ENCODE measurements at regions of chr20 and their contacts with region 1.

Region 1: DNA sequence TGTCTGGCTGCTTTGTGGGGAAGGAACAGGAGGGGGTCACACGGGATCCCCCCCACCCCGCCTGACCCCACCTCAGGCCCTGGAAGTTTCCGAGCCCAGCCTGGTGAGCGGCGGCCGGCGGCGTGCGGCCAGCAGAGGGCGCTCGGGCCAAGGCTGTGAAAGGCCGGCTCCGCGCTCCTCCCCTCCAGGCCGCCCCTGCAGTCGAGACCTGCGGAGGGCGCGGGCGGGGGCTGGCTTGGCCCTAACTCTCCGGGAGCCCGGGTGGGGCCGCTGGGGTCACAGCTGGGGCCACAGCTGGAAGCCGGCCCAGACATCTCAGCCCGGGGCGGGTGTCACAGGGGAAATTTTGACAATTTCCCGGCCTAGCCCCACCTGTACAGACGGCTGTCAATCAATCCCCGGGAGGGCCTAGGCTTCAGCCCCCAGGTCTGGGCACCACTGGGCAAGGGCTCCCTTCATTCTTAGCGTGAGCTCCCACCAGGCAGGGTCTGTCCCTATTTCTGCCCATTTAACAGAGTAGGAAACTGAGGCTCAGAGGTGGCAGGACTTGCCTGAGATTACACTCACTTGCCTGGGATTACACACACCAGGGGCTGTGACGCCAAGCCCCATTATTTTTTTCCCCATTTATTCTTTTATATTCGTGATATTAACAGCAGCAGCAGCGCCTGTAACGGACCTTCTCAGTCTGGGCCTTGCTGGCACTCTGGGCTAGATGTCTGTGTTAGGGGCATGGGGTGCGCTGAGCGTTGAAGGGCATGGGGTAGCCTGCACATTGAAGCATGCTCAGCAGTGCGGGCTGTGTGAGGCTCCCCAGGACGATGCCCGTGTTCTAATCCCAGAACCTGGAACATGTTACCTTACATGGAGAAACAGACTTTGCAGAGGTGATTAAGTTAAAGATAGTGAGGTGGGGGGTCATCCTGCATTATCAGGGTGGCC is 23.0 kb downstream of the ZBP1 start:
- DNase-seq: peak; percentile 80 to 93 (median 89)
- ATAC-seq: peak; percentile 92
- H3K4me3 ChIP-seq: no peak overlapping the region; the same call in 1 of the 2 replicates
- H3K27ac ChIP-seq: no peak overlapping the region
- H3K4me1 ChIP-seq: peaks cover 15 to 32% of the 10 kb centered on the region in 2 experiments; a peak in 4 of 5 replicates
- H3K27me3 ChIP-seq: peaks cover 6 to 33% of the 10 kb centered on the region in 2 experiments; a peak in 2 of 5 replicates
- CTCF ChIP-seq: peak; percentile 82 to 95 (median 83)
- EP300 ChIP-seq: no peak
- POLR2A ChIP-seq: no peak
- RAD21 ChIP-seq: peak; percentile 87 to 89

Region 2: GRCh38 chr20:57383447-57384347 is 213.6 kb before region 1 on chr20:
- CTCF ChIA-PET with region 1: interaction called, 12 read pairs
- POLR2A ChIA-PET with region 1: no interaction called
- in situ Hi-C with region 1: loop called (anchors 5 kb)
- intact Hi-C with region 1: loop called (anchors 1 kb)
- DNase-seq: no peak
- ATAC-seq: no peak
- H3K4me3 ChIP-seq: no peak overlapping the region
- H3K27ac ChIP-seq: no peak overlapping the region
- H3K4me1 ChIP-seq: peaks cover 2 to 16% of the 10 kb centered on the region in 2 experiments; a peak in 4 of 5 replicates
- H3K27me3 ChIP-seq: no peaks in the 10 kb centered on the region
- CTCF ChIP-seq: no peak
- EP300 ChIP-seq: no peak
- POLR2A ChIP-seq: no peak
- RAD21 ChIP-seq: no peak

Region 3: DNA sequence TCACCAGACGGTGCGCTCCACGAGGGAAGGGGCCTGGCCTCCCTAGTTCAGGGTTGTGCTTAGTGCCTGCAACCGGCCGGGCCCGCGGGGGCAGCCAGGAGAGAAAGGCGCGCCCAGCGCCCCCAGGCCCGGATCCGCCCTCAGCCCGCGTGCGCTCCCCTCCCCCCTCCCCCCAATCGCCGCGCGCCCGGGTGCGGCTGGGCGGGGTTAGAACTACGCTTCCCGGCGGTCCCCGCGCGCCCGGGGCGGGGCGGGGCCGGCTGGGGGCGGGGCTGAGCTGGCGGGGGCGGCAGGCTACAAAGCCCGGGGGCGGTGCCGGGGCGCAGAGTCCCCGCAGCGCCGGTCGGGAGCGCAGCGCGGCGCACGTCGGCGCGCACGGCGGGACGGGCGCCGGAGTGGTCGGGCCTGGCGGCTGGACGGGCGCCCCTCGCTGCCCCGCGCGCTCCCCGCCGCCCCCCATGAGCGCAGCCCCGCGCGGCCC is 206.2 kb before region 1 on chr20 and contains the start of gene RBM38:
- CTCF ChIA-PET with region 1: no interaction called
- POLR2A ChIA-PET with region 1: no interaction called
- in situ Hi-C with region 1: loop called (anchors 5 kb)
- intact Hi-C with region 1: no loop called
- DNase-seq: peak; percentile 89 to 96 (median 92)
- ATAC-seq: peak; percentile 76
- H3K4me3 ChIP-seq: peak within 1 kb of the TSS; percentile 75
- H3K27ac ChIP-seq: peak within 1 kb of the TSS; percentile 95
- H3K4me1 ChIP-seq: peaks cover 34 to 68% of the 10 kb centered on the region in 2 experiments
- H3K27me3 ChIP-seq: no peaks in the 10 kb centered on the region
- CTCF ChIP-seq: no peak
- EP300 ChIP-seq: no peak
- POLR2A ChIP-seq: peak; percentile 76
- RAD21 ChIP-seq: no peak
- polyA plus RNA-seq, gene RBM38: 0.28 to 0.39 TPM

Region 4: DNA sequence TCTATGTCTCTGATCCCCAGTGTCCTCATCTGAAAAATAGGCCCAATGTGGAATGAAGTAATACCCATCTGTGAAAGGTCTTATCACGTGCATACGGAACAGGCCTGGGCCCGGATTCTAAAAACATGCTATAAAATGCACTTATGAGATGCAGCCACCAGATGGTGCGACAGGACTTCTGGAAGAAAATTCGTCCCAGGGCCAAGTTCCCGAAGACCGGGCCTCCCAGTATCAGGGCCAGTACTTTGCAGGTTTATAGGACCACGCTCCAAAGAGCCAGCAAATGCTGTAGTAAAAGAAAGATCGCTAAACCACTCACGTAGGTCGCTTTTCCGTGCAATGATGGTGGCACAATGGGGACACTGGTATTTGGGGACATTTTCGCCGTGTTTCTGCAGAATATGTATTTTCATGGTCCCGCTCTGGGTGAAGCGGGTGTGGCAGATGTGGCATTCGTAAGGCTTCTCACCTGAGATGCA is 83.0 kb before region 1 on chr20:
- CTCF ChIA-PET with region 1: interaction called, 82 read pairs
- POLR2A ChIA-PET with region 1: interaction called, 3 read pairs
- in situ Hi-C with region 1: no loop called
- intact Hi-C with region 1: loop called (anchors 1 kb)
- DNase-seq: peak; percentile 41 to 63 (median 42)
- ATAC-seq: peak; percentile 65
- H3K4me3 ChIP-seq: no peak overlapping the region
- H3K27ac ChIP-seq: no peak overlapping the region
- H3K4me1 ChIP-seq: no peaks in the 10 kb centered on the region
- H3K27me3 ChIP-seq: no peaks in the 10 kb centered on the region
- CTCF ChIP-seq: peak; percentile 61 to 71 (median 64)
- EP300 ChIP-seq: no peak
- POLR2A ChIP-seq: no peak
- RAD21 ChIP-seq: peak; percentile 43 to 64

Region 5: DNA sequence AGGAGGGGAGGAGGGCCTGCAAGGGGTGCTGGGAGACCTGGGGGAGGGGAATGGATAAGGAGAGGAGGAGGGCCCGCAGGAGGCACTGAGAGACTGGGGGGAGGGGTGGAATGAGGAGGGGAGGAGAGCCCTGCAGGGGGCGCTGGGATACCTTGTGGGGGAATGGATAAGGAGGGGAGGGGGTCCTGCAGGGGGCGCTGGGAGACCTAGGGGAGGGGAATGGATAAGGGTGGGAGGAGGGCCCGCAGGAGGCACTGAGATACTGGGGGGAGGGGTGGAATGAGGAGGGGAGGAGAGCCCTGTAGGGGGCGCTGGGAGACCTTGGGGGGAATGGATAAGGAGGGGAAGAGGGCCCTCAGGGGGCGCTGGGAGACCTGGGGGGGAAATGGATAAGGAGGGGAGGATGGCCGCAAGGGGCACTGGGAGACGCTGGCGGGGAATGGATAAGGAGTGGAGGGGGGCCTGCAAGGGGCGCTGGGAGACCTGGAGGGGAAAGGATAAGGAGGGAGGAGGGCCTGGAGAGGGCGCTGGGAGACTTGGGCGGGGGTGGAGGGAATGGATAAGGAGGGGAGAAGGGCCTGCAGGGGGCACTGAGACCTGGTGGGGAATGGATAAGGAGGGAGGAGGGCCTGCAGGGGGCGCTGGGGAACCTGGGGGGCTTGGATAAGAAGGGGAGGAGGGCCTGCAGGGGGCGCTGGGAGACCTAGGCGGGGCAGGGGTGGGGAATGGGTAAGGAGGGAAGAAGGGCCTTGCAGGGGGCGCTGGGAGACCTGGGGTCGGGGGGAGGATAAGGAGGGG is 71.0 kb before region 1 on chr20:
- CTCF ChIA-PET with region 1: interaction called, 103 read pairs
- POLR2A ChIA-PET with region 1: no interaction called
- in situ Hi-C with region 1: loop called (anchors 5 kb)
- intact Hi-C with region 1: loop called (anchors 1 kb)
- DNase-seq: peak; percentile 70 to 95 (median 77)
- ATAC-seq: peak; percentile 60
- H3K4me3 ChIP-seq: peak overlapping the region; percentile 26
- H3K27ac ChIP-seq: peak overlapping the region; percentile 93; the same call in 1 of the 3 replicates
- H3K4me1 ChIP-seq: peaks cover 22 to 32% of the 10 kb centered on the region in 2 experiments; a peak in 4 of 5 replicates
- H3K27me3 ChIP-seq: no peaks in the 10 kb centered on the region
- CTCF ChIP-seq: peak; percentile 59 to 98 (median 86)
- EP300 ChIP-seq: no peak; the same call in none of the 2 replicates
- POLR2A ChIP-seq: no peak
- RAD21 ChIP-seq: peak in 1 of 2 experiments; percentile 17; a peak in 1 of 4 replicates

Region 6: DNA sequence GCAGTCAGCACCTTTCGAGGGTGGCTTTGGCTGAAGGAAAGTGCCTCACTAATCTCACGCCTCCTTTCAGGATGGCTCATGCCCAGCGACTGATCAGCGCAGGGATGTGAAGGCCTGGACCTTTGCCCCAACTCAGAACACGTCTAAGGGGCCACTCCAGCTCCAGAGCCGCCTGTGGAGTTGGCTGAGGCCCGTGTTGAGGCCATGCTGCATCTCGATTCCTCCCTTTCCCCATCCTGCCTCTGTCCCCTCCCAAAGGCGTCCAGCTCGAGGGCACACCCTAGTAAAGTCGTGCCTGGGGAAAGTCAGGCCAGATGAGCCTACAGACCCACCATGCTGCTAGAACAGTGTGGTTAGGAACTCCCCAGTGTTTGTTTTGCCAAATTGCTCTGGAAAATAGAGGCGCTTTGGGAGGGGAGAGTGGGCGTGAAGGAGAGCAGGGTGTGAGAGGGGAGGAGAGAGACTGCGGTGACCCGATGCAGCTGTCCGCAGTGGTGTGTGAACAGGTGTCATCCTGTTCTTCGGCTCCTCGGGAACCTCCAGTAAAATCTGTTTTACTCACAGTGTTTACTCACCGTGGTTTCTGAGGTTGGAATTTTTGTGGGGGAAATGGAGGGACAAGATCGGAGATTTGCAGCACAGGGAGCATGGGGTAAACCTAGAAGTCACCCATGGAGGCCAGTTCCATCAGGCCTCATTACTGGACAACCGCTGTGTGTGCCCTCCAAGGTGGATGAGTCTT is 197.5 kb after region 1 on chr20:
- CTCF ChIA-PET with region 1: no interaction called
- POLR2A ChIA-PET with region 1: no interaction called
- in situ Hi-C with region 1: no loop called
- intact Hi-C with region 1: no loop called
- DNase-seq: no peak
- ATAC-seq: no peak
- H3K4me3 ChIP-seq: no peak overlapping the region
- H3K27ac ChIP-seq: no peak overlapping the region
- H3K4me1 ChIP-seq: no peaks in the 10 kb centered on the region
- H3K27me3 ChIP-seq: peaks cover 5 to 40% of the 10 kb centered on the region in 2 experiments; a peak in 3 of 5 replicates
- CTCF ChIP-seq: no peak
- EP300 ChIP-seq: no peak
- POLR2A ChIP-seq: no peak
- RAD21 ChIP-seq: no peak

Region 7: DNA sequence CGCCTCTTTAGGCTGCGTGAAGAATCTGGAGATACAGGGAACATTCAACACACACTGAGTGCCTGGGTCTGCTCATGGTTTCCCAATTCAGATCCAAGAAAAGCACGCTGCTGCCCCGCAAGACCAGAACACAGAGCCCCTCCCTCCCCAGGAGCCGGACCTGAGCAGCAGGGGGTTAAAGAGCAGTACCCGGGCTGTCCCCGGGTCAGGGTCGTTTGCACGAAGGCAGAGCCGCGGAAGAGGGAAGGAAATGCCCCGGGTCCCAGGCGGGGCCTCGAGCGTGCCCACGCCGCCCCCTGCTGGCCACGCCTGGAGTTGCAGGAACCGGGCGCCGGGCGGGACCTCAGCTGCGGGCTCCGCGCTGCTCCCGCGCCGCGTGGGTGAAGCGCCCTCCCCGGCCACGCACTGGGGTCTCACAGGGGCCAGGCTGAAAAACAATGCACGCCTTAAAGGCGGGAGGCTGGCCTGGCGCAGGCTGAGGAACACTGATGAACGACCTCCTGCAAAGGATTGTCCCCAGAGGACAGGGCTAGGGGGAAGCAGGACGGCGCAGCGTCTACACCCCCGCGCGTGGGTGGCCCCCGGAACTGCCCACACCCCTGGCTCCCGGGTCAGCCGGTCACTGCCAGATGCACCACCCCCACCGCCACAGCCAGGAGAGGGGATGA is 582.3 kb after region 1 on chr20:
- CTCF ChIA-PET with region 1: interaction called, 7 read pairs
- POLR2A ChIA-PET with region 1: no interaction called
- in situ Hi-C with region 1: no loop called
- intact Hi-C with region 1: loop called (anchors 5 kb)
- DNase-seq: peak; percentile 73 to 89 (median 84)
- ATAC-seq: peak; percentile 96
- H3K4me3 ChIP-seq: no peak overlapping the region; the same call in 1 of the 2 replicates
- H3K27ac ChIP-seq: no peak overlapping the region
- H3K4me1 ChIP-seq: peaks cover 0 to 9% of the 10 kb centered on the region in 2 experiments; a peak in 3 of 5 replicates
- H3K27me3 ChIP-seq: peaks cover 22 to 47% of the 10 kb centered on the region in 2 experiments; a peak in 4 of 5 replicates
- CTCF ChIP-seq: peak; percentile 85 to 89 (median 86)
- EP300 ChIP-seq: no peak
- POLR2A ChIP-seq: no peak
- RAD21 ChIP-seq: peak; percentile 68 to 86

Region 8: GRCh38 chr20:58209652-58210397 is 612.6 kb after region 1 on chr20:
- CTCF ChIA-PET with region 1: interaction called, 59 read pairs
- POLR2A ChIA-PET with region 1: interaction called, 3 read pairs
- in situ Hi-C with region 1: loop called (anchors 25 kb)
- intact Hi-C with region 1: loop called (anchors 2 kb)
- DNase-seq: peak; percentile 86 to 94 (median 92)
- ATAC-seq: peak; percentile 96
- H3K4me3 ChIP-seq: no peak overlapping the region
- H3K27ac ChIP-seq: no peak overlapping the region
- H3K4me1 ChIP-seq: peaks cover 0 to 6% of the 10 kb centered on the region in 2 experiments; a peak in 1 of 5 replicates
- H3K27me3 ChIP-seq: peaks cover 26 to 63% of the 10 kb centered on the region in 2 experiments
- CTCF ChIP-seq: peak; percentile 100
- EP300 ChIP-seq: peak; percentile 29; the same call in 1 of the 2 replicates
- POLR2A ChIP-seq: no peak
- RAD21 ChIP-seq: peak; percentile 96 to 99

Measured in K562 (cell line).